ENCODE measurements at regions of chr6 and their contacts with region 1.

Region 1: GRCh38 chr6:123715006-123715875 is 78.5 kb upstream of the TRDN start:
- DNase-seq: peak in 1 of 4 donors; percentile 24
- ATAC-seq: peak; percentile 68
- H3K4me3 ChIP-seq: no peak overlapping the region
- H3K27ac ChIP-seq: no peak overlapping the region
- H3K4me1 ChIP-seq: no peaks in the 10 kb centered on the region
- H3K27me3 ChIP-seq: no peaks in the 10 kb centered on the region
- CTCF ChIP-seq: peak; percentile 32 to 38

Region 2: GRCh38 chr6:123415844-123416468 is 299.3 kb before region 1 on chr6:
- intact Hi-C with region 1: loop called (anchors 10 kb)
- DNase-seq: peak in 2 of 4 donors; percentile 60 to 73
- ATAC-seq: peak; percentile 85
- H3K4me3 ChIP-seq: no peak overlapping the region
- H3K27ac ChIP-seq: no peak overlapping the region
- H3K4me1 ChIP-seq: no peaks in the 10 kb centered on the region
- H3K27me3 ChIP-seq: no peaks in the 10 kb centered on the region
- CTCF ChIP-seq: peak; percentile 46 to 53

Region 3: DNA sequence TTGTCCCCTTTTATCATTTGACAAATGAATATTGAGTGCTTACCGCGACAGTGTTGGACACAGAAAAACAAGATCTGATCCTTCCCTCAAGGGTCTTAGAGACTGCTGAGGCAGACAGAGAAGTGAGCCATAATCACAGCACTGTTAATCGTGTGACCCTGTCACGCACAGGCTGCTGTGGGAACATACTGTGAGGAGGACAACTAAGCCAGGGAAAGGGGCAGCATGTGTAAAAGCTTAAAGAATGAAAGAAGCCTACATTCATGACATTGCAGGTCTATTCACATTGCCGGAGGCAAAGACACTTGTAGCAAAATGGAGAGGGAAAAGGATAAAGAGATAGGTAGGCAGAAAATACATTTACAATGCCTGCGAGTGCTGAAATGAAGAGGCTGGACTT is 111.2 kb before region 1 on chr6:
- intact Hi-C with region 1: no loop called
- DNase-seq: no peak
- ATAC-seq: no peak
- H3K4me3 ChIP-seq: no peak overlapping the region
- H3K27ac ChIP-seq: no peak overlapping the region
- H3K4me1 ChIP-seq: no peaks in the 10 kb centered on the region
- H3K27me3 ChIP-seq: no peaks in the 10 kb centered on the region
- CTCF ChIP-seq: no peak

Region 4: GRCh38 chr6:124269733-124270132 is 554.5 kb after region 1 on chr6:
- intact Hi-C with region 1: no loop called
- DNase-seq: no peak
- ATAC-seq: no peak
- H3K4me3 ChIP-seq: no peak overlapping the region
- H3K27ac ChIP-seq: no peak overlapping the region
- H3K4me1 ChIP-seq: no peaks in the 10 kb centered on the region
- H3K27me3 ChIP-seq: no peaks in the 10 kb centered on the region
- CTCF ChIP-seq: no peak